Aorta (tissue), 5 donors: ENCODE measurements at regions of chr14 and their contacts with region 1.

Region 1: DNA sequence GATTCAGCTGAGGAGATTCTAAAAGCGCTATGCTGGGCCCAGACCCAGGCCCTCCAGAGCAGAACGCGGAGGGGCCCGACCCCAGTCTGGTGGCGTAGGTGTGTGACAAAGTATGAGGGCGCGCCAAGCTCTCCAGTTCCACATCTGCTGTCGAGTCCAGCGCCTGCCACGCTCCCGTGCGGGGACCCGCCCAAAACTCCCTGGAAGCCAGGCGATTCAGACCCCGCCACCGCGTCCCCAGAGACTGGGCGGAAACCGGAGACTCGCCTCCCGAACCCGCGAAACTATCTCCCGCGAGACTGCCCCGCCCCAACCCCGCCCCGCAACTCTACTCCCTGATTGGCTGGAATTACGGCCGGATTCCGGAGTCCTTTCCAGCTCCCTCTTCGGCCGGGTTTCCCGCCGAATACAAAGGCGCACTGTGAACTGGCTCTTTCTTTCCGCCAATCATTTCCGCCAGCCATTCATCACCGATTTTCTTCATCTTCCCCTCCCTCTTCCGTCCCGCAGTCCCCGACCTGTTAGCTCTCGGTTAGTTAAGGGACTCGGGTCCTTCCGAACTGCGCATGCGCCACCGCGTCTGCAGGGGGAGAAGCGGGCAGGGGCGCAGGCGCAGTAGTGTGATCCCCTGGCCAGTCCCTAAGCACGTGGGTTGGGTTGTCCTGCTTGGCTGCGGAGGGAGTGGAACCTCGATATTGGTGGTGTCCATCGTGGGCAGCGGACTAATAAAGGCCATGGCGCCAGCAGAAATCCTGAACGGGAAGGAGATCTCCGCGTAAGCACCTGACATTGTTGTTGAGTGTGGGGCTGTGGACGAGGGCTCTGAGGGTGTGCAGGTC is at the start of gene MTHFD1:
- DNase-seq: peak; percentile 100
- ATAC-seq: peak; percentile 96
- H3K4me3 ChIP-seq: peak within 1 kb of the TSS; percentile 36 to 74
- H3K27ac ChIP-seq: peak within 1 kb of the TSS; percentile 47 to 54
- H3K4me1 ChIP-seq: no peaks in the 10 kb centered on the region
- H3K27me3 ChIP-seq: no peaks in the 10 kb centered on the region
- total RNA-seq, gene MTHFD1: 39.4 to 44.6 TPM

Region 2: GRCh38 chr14:64338616-64339316 is 49.1 kb before region 1 on chr14:
- intact Hi-C with region 1: loop called in 1 of 2 experiments (anchors 5 kb)
- DNase-seq: peak; percentile 95 to 97
- ATAC-seq: peak; percentile 94
- H3K4me3 ChIP-seq: peak overlapping the region; percentile 47 to 51
- H3K27ac ChIP-seq: peak overlapping the region in 1 of 2 donors; percentile 71
- H3K4me1 ChIP-seq: no peaks in the 10 kb centered on the region
- H3K27me3 ChIP-seq: no peaks in the 10 kb centered on the region

Region 3: GRCh38 chr14:64503478-64504309 is 115.8 kb after region 1 on chr14 and contains the start of gene ZBTB25:
- intact Hi-C with region 1: loop called in 1 of 2 experiments (anchors 5 kb)
- DNase-seq: peak; percentile 95
- ATAC-seq: peak; percentile 92
- H3K4me3 ChIP-seq: peak within 1 kb of the TSS; percentile 74 to 88
- H3K27ac ChIP-seq: peak within 1 kb of the TSS; percentile 94
- H3K4me1 ChIP-seq: no peaks in the 10 kb centered on the region
- H3K27me3 ChIP-seq: no peaks in the 10 kb centered on the region
- total RNA-seq, gene ZBTB25: 17.2 to 25.4 TPM

Region 4: DNA sequence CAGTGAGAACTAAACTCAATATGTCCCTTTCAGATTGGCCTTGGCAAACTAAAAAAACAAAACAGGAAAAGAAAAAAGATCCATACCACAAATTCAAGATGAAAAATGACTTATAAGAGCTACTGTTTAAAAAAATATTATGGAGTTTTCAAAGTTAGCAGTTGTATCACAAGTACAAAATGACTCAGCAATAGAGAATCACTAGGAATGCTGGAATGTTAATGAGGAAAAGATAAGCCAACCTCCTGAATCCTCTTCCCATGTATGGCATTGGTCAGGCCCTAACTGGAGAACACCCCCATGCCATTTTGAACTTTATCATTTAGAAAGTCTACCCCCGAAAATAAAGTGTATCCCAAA is 224.1 kb after region 1 on chr14:
- intact Hi-C with region 1: no loop called
- DNase-seq: no peak
- ATAC-seq: no peak
- H3K4me3 ChIP-seq: no peak overlapping the region
- H3K27ac ChIP-seq: no peak overlapping the region
- H3K4me1 ChIP-seq: peaks cover 3 to 4% of the 10 kb centered on the region in 2 donors
- H3K27me3 ChIP-seq: no peaks in the 10 kb centered on the region